IMR-90 (cell line): ENCODE measurements at regions of chr4 and their contacts with region 1.

Region 1: GRCh38 chr4:163484906-163485305 is 9.6 kb upstream of the TMA16 start:
- DNase-seq: peak; percentile 51
- ATAC-seq: peak; percentile 72
- H3K4me3 ChIP-seq: no peak overlapping the region
- H3K27ac ChIP-seq: no peak overlapping the region
- H3K4me1 ChIP-seq: no peaks in the 10 kb centered on the region
- H3K27me3 ChIP-seq: peaks cover 7% of the 10 kb centered on the region
- CTCF ChIP-seq: peak; percentile 65
- POLR2A ChIP-seq: no peak
- RAD21 ChIP-seq: peak; percentile 67

Region 2: GRCh38 chr4:163295138-163295537 is 189.8 kb before region 1 on chr4:
- CTCF ChIA-PET with region 1: no interaction called
- POLR2A ChIA-PET with region 1: no interaction called
- dilution Hi-C with region 1: no loop called
- in situ Hi-C with region 1: no loop called
- intact Hi-C with region 1: no loop called
- DNase-seq: no peak
- ATAC-seq: no peak
- H3K4me3 ChIP-seq: no peak overlapping the region
- H3K27ac ChIP-seq: no peak overlapping the region
- H3K4me1 ChIP-seq: no peaks in the 10 kb centered on the region
- H3K27me3 ChIP-seq: no peaks in the 10 kb centered on the region
- CTCF ChIP-seq: no peak
- POLR2A ChIP-seq: no peak
- RAD21 ChIP-seq: no peak

Region 3: GRCh38 chr4:164731827-164732474 is 1247.0 kb after region 1 on chr4:
- CTCF ChIA-PET with region 1: no interaction called
- POLR2A ChIA-PET with region 1: no interaction called
- dilution Hi-C with region 1: no loop called
- in situ Hi-C with region 1: no loop called
- intact Hi-C with region 1: loop called (anchors 5 kb)
- DNase-seq: peak; percentile 28
- ATAC-seq: peak; percentile 68; the same call in 1 of the 2 replicates
- H3K4me3 ChIP-seq: no peak overlapping the region
- H3K27ac ChIP-seq: no peak overlapping the region
- H3K4me1 ChIP-seq: no peaks in the 10 kb centered on the region
- H3K27me3 ChIP-seq: no peaks in the 10 kb centered on the region
- CTCF ChIP-seq: peak; percentile 73
- POLR2A ChIP-seq: no peak
- RAD21 ChIP-seq: peak; percentile 72

Region 4: GRCh38 chr4:164748375-164748774 is 1263.5 kb after region 1 on chr4:
- CTCF ChIA-PET with region 1: no interaction called
- POLR2A ChIA-PET with region 1: no interaction called
- dilution Hi-C with region 1: no loop called
- in situ Hi-C with region 1: no loop called
- intact Hi-C with region 1: loop called (anchors 5 kb)
- DNase-seq: peak; percentile 19
- ATAC-seq: no peak
- H3K4me3 ChIP-seq: no peak overlapping the region
- H3K27ac ChIP-seq: no peak overlapping the region
- H3K4me1 ChIP-seq: no peaks in the 10 kb centered on the region
- H3K27me3 ChIP-seq: no peaks in the 10 kb centered on the region
- CTCF ChIP-seq: peak; percentile 45
- POLR2A ChIP-seq: no peak
- RAD21 ChIP-seq: peak; percentile 26; the same call in 1 of the 2 replicates